Posterior vena cava (tissue), 2 donors: ENCODE measurements at regions of chr21 and their contacts with region 1.

Region 1: GRCh38 chr21:32412162-32413014 is at the start of gene EVA1C:
- DNase-seq: peak; percentile 91
- total RNA-seq, gene EVA1C: 39.2 to 53.5 TPM

Region 2: DNA sequence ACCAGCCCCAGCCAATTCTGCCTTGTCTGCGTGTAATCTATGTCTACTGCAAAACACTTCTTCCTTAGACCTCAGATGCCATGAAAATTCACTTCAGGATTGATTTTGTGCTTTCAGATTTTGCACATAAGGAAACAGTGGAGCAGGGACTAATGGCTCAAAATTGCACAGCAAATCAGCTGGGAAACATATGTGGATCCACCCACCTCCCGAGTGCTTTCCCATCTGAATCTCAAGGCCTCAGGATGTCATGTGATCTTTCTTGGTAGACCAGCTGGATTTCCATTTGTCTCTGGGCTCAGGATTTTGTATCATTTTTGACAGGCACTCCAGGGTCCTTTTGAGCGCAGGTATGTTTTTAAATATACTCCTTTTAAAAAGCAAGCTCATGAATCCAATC is 292.2 kb before region 1 on chr21:
- intact Hi-C with region 1: no loop called
- DNase-seq: no peak

Region 3: GRCh38 chr21:32457360-32457840 is 45.0 kb after region 1 on chr21:
- intact Hi-C with region 1: loop called (anchors 5 kb)
- DNase-seq: no peak

Region 4: GRCh38 chr21:32569261-32570230 is 157.2 kb after region 1 on chr21:
- intact Hi-C with region 1: loop called (anchors 2 to 10 kb)
- DNase-seq: peak; percentile 89